Heart right ventricle (tissue), 16 donors: ENCODE measurements at regions of chr16 and their contacts with region 1.

Region 1: DNA sequence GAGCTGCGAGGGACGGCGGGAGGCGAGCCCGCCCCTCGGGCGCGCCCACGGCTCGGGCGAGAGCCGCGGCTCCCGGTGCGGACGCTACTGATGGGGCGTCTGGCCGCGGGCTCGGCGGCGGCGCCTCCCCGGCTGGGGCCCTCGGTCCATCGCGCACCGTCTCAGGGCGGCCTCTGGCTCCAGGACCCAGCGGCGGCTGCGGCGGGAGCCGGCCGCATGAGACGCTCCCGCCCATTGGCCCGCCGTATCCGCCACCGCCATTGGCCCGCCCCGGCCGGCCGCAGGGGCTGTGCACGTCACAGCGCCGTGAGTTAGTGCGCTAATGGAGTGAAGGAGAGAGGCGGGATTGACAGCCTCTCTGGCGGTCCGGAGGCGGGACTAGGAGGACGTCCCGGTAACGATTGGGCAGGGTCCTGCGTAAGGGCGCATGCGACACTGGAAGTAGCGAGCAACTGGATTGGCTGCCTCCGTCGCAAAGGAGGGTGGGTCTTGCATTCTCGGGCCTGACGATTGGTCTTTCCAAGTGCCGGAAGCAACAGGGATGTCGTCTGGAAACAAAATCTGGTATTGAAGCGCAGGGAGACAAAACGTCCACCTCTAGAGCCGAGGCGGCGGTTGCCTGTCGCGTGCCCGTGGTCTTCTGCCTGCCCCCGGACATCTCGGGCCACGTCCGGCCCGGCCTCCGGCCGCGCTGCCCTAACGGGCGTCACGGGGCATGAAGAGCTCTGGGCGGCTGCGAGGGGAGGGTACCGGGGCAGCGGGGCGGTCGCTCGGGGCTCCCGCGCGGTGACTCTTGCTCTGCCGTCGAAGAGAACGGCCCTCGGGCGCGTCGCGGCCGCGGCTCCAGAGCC is at the start of gene ANKRD11:
- DNase-seq: peak; percentile 98 to 99
- ATAC-seq: peak; percentile 97 to 99 (median 98)
- H3K4me3 ChIP-seq: peak within 1 kb of the TSS; percentile 72 to 98 (median 86)
- H3K27ac ChIP-seq: peak within 1 kb of the TSS; percentile 93 to 98 (median 94)
- H3K4me1 ChIP-seq: peaks cover 18 to 62% (median 47%) of the 10 kb centered on the region in 9 donors
- H3K27me3 ChIP-seq: no peaks in the 10 kb centered on the region
- CTCF ChIP-seq: no peak
- total RNA-seq, gene ANKRD11: 55.9 to 93.6 (median 67.4) TPM

Region 2: DNA sequence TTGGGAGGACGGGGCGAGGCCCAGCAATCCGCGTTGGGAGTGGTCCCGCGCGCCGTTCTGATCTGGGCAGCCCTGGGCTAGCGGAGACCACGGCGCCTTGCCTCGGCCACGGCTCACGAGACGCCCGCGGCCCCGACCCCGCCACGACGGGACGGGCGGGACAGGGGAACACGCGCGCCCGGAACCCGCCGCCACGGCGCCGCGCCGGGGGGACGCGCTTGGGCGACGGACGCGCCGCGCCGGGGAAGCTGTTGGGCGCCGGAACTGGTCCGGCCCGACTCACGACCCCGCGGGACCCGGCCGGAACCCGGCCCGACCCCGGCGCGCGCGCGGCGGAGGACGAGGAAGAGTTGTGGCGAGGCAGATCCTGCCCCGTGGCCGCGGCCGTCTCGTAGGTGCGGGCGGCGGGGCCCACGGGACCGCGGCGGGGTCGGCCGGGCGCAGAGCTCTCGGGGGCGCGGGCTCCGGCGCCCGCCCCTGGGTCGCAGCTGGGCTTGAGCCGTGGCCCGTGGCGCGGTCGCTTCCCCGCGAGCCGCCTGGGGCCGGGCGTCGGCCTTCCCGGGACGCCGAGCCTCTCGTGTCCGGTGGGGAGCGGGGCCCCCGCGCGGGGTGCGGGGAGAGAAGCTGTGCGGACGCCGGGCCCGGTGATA is 396.9 kb before region 1 on chr16 and contains the start of gene ACSF3:
- intact Hi-C with region 1: no loop called
- DNase-seq: peak; percentile 51 to 76
- ATAC-seq: peak; percentile 84 to 94 (median 89)
- H3K4me3 ChIP-seq: peak within 1 kb of the TSS; percentile 65 to 97 (median 88)
- H3K27ac ChIP-seq: peak within 1 kb of the TSS in 9 of 10 donors; percentile 70 to 87 (median 80)
- H3K4me1 ChIP-seq: peaks cover 0 to 52% (median 24%) of the 10 kb centered on the region in 9 donors
- H3K27me3 ChIP-seq: peaks cover 0 to 36% (median 29%) of the 10 kb centered on the region in 7 donors
- CTCF ChIP-seq: no peak
- total RNA-seq, gene ACSF3: 11.0 to 22.5 (median 17.8) TPM

Region 3: DNA sequence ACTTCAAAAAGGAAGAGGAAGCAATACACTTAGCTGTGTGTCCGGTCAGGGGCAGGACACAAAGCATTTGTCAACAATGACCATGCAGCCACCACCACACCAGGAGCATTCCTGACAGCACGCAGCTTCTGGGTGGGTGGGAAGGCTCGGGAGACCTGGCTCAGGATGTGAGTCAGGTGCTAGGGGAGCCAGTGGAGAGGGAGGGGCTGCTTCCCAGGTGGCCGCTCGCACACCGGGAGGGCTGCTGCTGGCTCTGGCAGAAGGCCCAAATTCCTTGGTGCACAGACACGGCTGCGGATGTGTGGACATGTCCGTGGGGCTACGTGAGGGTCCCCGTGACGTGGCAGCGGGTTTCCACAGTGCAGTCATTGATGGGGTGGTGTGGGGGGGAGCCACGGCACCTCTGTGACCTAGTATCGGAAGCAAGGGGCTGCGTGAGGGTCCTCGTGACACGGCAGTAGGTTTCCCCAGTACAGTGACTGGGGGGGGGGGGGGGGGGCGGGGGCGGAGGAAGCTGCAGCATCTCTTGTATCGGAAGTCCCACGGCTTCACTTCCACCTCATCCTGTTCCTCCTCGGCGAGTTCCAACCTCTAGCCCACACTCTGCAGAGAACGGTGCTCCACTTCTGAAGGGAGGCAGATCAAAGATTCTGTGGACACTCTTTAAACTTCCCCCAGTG is 160.3 kb before region 1 on chr16:
- intact Hi-C with region 1: loop called in 6 of 10 experiments (anchors 5 to 10 kb)
- DNase-seq: no peak
- ATAC-seq: peak in 6 of 8 donors; percentile 20 to 50 (median 34)
- H3K4me3 ChIP-seq: peak overlapping the region in 4 of 10 donors; percentile 7 to 18 (median 10)
- H3K27ac ChIP-seq: peak overlapping the region in 9 of 10 donors; percentile 13 to 78 (median 42)
- H3K4me1 ChIP-seq: peaks cover 32 to 93% (median 71%) of the 10 kb centered on the region in 9 donors
- H3K27me3 ChIP-seq: no peaks in the 10 kb centered on the region
- CTCF ChIP-seq: no peak

Region 4: DNA sequence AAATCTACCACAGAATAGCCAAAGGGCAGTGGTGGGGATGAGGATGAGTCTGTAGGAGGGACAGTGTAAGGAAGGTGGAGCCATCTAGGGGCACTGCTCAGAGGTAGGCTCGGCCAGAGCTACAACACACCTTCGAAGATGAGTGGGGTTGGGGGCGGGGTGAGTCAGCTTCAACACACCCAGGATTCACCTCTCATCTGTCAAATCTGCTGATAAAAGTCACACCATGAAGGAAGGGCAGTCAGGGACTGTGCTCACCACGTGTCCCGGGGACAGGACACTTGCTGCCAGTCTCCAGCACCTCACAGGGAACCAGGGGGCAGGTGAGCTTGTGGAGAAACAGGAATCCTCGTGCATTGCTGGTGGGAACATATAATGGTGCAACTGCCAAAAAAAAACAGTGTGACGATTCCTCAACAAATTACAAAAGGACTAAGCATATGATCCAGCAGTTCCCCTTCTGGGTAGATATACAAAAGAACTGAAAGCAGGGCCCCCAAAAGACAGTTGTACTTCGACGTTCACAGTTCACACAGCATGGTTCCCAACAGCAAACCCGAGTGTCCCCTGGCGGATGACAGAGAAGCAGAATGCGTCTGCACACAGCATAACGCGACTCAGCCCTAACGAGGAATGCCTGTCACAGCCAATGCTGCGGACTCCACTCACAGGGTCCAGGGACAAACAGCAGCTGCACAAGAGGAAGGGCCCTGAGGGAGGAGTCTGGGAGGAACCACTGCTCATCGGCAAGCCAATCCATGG is 133.4 kb before region 1 on chr16:
- intact Hi-C with region 1: loop called in 1 of 10 experiments (anchors 10 kb)
- DNase-seq: peak in 1 of 2 donors; percentile 68
- ATAC-seq: peak; percentile 43 to 69 (median 60)
- H3K4me3 ChIP-seq: no peak overlapping the region
- H3K27ac ChIP-seq: peak overlapping the region in 4 of 10 donors; percentile 4 to 46 (median 24)
- H3K4me1 ChIP-seq: peaks cover 48 to 100% (median 96%) of the 10 kb centered on the region in 9 donors
- H3K27me3 ChIP-seq: no peaks in the 10 kb centered on the region
- CTCF ChIP-seq: peak in 4 of 9 donors; percentile 20 to 48 (median 32)

Region 5: DNA sequence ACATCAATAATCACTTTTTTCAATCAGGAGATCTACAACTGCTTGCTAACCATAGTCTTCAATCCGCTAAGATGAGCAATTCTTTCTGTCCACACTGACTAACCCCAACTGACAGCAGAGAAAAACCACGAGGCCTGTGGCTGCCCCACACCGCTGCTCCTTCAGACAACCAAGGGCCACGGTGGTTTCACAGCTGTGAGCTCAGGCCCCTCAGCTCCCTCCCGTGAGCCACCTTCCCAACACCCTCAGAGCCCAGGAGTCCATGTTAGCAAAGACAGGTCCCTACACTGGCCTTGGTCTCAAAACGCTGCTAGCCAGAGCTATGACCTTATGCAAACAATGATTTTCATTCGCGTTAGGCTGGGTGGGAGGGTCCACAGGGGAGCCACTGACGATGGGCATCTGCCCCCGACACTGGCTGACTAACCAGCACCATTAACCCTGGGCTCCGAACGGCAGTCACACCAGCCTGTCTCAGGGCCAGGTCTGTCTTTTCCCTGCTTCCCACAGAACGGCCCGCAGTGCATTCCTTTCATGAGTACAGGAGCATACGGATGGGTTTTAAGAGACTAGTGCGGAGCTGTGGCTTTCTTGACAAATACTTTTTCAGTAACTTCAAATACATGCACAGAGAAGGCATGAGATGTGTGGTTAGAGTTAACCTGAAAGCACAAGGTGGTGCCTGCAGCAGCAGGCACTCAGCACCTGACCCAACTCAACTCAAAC is 67.5 kb before region 1 on chr16:
- intact Hi-C with region 1: loop called in 2 of 10 experiments (anchors 10 kb)
- DNase-seq: no peak
- ATAC-seq: peak; percentile 24 to 51 (median 40)
- H3K4me3 ChIP-seq: peak overlapping the region in 1 of 10 donors; percentile 6
- H3K27ac ChIP-seq: peak overlapping the region in 8 of 10 donors; percentile 2 to 61 (median 26)
- H3K4me1 ChIP-seq: peaks cover 12 to 77% (median 60%) of the 10 kb centered on the region in 9 donors
- H3K27me3 ChIP-seq: no peaks in the 10 kb centered on the region
- CTCF ChIP-seq: no peak

Region 6: DNA sequence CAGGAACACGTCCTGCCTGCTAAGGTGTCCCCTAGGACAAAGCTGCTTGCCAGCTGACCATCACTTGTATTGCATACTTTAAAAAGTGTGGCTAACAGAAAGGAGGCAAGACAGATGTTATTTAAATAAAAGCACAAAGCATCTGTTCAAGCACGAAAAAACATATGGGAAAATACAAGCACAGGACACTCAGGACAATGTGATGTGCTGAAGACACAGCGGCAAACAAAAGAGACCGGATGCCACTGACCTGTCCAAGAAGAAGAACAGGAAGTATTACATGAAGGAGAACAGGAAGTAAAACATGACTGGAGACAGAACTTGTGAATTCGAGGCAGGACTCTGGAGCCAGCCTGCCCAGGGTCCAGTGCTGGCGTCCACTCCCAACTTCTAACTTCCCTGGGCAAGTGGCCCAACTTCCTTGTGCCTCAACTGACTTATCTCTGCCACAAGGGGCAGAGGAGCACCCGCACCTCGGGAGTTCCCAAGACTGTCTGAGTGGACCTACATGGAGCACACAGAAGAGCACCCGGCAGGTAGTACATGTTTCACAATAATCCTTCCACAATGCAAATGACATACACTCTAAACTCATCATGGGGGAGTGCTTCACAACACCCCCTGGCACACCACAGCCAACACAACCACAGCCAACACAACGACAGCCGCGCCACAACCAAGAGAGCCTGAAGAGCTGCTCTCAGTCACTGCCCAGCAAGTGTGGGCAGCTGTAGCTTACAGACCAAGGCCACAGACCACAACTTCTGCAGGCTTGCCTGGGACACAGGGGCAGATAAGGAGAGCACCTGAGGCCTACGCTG is 36.9 kb before region 1 on chr16:
- intact Hi-C with region 1: loop called in 2 of 10 experiments (anchors 5 kb)
- DNase-seq: peak in 1 of 2 donors; percentile 29
- ATAC-seq: peak; percentile 52 to 80 (median 62)
- H3K4me3 ChIP-seq: no peak overlapping the region
- H3K27ac ChIP-seq: peak overlapping the region in 3 of 10 donors; percentile 27 to 66 (median 33)
- H3K4me1 ChIP-seq: peaks cover 22 to 87% (median 72%) of the 10 kb centered on the region in 9 donors
- H3K27me3 ChIP-seq: no peaks in the 10 kb centered on the region
- CTCF ChIP-seq: peak in 7 of 9 donors; percentile 10 to 46 (median 31)

Region 7: GRCh38 chr16:89764711-89765201 is 274.1 kb after region 1 on chr16:
- intact Hi-C with region 1: loop called in 1 of 10 experiments (anchors 5 kb)
- DNase-seq: peak in 1 of 2 donors; percentile 26
- ATAC-seq: peak in 7 of 8 donors; percentile 51 to 82 (median 72)
- H3K4me3 ChIP-seq: peak overlapping the region in 3 of 10 donors; percentile 5 to 46 (median 15)
- H3K27ac ChIP-seq: peak overlapping the region in 2 of 10 donors; percentile 35 to 87
- H3K4me1 ChIP-seq: peaks cover 0 to 34% (median 0%) of the 10 kb centered on the region in 9 donors
- H3K27me3 ChIP-seq: no peaks in the 10 kb centered on the region
- CTCF ChIP-seq: no peak